ENCODE measurements at regions of chr11 and their contacts with region 1.

Region 1: DNA sequence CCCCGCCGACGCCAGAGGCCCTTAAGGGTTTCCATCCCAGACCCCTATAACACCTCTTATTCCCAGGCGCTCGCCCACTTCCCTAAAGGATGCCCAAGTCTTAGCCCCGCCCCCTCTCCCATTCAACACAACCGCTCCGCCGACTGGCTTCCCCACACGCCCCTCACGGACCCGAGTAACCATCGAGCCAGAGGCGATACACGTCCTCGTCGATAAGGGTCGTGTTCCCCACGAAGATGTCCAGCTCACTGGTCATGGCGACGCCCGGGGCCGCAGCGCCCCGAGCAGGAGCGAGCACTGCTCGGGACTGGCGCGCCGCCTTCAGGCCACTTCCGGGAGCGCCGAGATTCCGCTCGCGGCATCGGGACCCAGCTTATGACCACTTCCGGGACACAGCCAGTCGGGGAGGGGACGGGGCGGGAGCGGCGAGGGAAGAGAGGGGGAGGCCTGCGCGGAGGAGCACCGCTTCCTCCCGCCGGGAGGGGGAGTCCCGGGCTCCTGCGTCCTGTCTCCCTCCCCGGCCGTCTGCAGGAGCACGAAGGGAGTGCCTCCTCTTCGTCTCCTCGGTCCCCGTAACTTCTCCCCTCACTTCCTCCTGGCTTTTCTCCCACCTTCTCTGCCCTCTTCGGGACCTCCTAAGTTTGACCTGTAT is at the start of gene FIBP:
- DNase-seq: peak; percentile 83
- ATAC-seq: peak; percentile 69
- H3K4me3 ChIP-seq: peak within 1 kb of the TSS; percentile 90
- H3K27ac ChIP-seq: peak within 1 kb of the TSS; percentile 84
- H3K4me1 ChIP-seq: peaks cover 29% of the 10 kb centered on the region
- H3K27me3 ChIP-seq: no peaks in the 10 kb centered on the region
- CTCF ChIP-seq: peak; percentile 78 to 84 (median 80)
- EP300 ChIP-seq: peak in 1 of 2 experiments; percentile 46; a peak in 1 of 4 replicates
- POLR2A ChIP-seq: peak; percentile 96
- RAD21 ChIP-seq: peak; percentile 45
- polyA plus RNA-seq, gene FIBP: 65.1 to 80.7 TPM

Region 2: DNA sequence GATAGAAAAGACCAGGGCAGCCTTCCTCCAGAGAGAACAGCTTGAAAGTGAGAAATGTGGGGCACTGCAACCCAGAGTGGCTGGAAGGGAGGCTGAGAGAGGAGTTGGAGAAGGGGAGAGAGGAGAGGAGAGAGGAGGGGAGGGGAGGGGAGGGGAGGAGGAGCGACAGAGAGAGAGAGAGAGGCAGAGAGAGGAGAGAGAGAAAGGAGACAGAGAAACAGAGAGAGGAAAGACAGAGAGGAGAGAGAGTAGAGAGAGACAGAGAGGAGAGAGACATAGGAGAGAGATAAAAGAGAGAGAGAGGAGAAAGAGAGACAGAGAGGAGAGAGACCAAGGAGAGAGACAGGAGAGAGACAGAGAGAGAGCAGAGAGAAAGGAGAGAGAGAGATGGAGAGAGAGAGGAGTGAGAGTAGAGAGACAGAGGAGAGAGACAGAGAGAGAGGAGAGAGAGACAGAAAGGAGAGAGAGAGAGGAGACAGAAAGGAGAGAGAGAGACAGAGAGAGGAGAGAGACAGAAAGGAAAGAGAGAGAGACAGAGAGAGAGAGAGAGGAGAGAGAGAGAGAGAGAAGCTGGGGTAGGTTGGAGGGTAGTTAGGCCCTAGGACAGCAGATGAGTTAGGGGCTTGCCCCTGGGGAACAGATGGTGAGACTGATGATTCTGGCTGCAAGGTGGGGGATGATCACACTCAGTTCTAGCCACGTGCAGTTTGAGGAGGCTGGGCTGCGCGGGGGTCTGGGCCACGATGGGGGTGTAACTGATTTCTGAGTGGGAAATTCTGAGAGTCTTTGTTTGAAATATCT is 372.0 kb before region 1 on chr11:
- CTCF ChIA-PET with region 1: no interaction called
- POLR2A ChIA-PET with region 1: no interaction called
- RAD21 ChIA-PET with region 1: no interaction called
- SMC1A ChIA-PET with region 1: no interaction called
- in situ Hi-C with region 1: no loop called
- intact Hi-C with region 1: no loop called
- DNase-seq: no peak
- ATAC-seq: peak; percentile 43; the same call in 2 of the 3 replicates
- H3K4me3 ChIP-seq: no peak overlapping the region
- H3K27ac ChIP-seq: no peak overlapping the region
- H3K4me1 ChIP-seq: no peaks in the 10 kb centered on the region
- H3K27me3 ChIP-seq: no peaks in the 10 kb centered on the region; a peak in 1 of 4 replicates
- CTCF ChIP-seq: no peak
- EP300 ChIP-seq: no peak
- POLR2A ChIP-seq: no peak
- RAD21 ChIP-seq: no peak

Region 3: GRCh38 chr11:65615229-65615941 is 272.9 kb before region 1 on chr11 and contains the start of gene PCNX3:
- CTCF ChIA-PET with region 1: interaction called, 3 read pairs
- POLR2A ChIA-PET with region 1: interaction called, 4 read pairs
- RAD21 ChIA-PET with region 1: no interaction called
- SMC1A ChIA-PET with region 1: interaction called, 11 read pairs
- in situ Hi-C with region 1: no loop called
- intact Hi-C with region 1: no loop called
- DNase-seq: peak; percentile 100
- ATAC-seq: peak; percentile 86
- H3K4me3 ChIP-seq: peak within 1 kb of the TSS; percentile 100
- H3K27ac ChIP-seq: peak within 1 kb of the TSS; percentile 91
- H3K4me1 ChIP-seq: peaks cover 24% of the 10 kb centered on the region
- H3K27me3 ChIP-seq: no peaks in the 10 kb centered on the region
- CTCF ChIP-seq: no peak
- EP300 ChIP-seq: peak in 1 of 2 experiments; percentile 57; a peak in 2 of 4 replicates
- POLR2A ChIP-seq: peak; percentile 64
- RAD21 ChIP-seq: no peak
- polyA plus RNA-seq, gene PCNX3: 0.03 to 0.15 TPM

Region 4: DNA sequence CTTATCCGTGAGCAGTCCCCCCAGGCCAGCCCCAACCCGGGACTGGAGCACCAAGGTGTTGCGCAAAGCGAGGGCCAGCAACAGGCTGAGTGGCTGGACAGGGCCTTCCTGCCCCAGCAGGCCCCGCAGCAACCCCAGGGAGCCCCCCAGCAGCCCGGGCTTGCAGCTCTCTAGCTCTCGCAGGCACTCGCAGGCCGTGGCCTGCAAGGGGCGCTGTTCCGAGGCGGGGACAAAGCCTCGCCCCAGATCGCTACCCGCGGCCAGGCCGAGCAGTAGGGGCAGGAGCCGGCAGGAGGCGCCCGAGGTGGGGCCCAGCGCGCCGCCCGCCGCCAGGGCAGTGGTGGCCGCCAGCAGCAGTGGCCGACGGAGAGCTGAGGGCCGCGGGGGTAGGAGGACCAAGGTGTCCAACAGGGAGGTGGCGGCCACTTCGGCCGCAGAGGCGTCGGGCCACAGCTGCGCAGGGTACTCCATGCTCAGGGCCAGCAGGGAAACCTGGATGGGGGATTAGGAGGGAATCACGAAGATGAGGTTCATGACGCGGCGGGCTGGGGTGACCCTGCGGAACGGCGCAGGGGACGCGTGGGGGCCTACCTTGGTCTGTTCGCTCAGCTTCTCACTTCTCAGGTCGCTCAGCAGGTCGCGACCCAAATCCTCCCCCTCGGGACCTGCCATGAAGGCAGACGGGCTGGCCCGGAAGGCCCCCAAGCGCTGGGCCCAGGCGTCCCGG is 108.3 kb before region 1 on chr11:
- CTCF ChIA-PET with region 1: interaction called, 20 read pairs
- POLR2A ChIA-PET with region 1: interaction called, 3 read pairs
- RAD21 ChIA-PET with region 1: interaction called, 4 read pairs
- SMC1A ChIA-PET with region 1: interaction called, 4 read pairs
- in situ Hi-C with region 1: no loop called
- intact Hi-C with region 1: no loop called
- DNase-seq: peak; percentile 21
- ATAC-seq: peak; percentile 94
- H3K4me3 ChIP-seq: peak overlapping the region; percentile 80
- H3K27ac ChIP-seq: peak overlapping the region; percentile 61
- H3K4me1 ChIP-seq: peaks cover 16% of the 10 kb centered on the region
- H3K27me3 ChIP-seq: no peaks in the 10 kb centered on the region
- CTCF ChIP-seq: peak; percentile 87 to 98 (median 92)
- EP300 ChIP-seq: no peak
- POLR2A ChIP-seq: peak; percentile 48
- RAD21 ChIP-seq: peak; percentile 76

Region 5: GRCh38 chr11:65873318-65874156 is 14.8 kb before region 1 on chr11:
- CTCF ChIA-PET with region 1: interaction called, 66 read pairs
- POLR2A ChIA-PET with region 1: interaction called, 22 read pairs
- RAD21 ChIA-PET with region 1: interaction called, 21 read pairs
- SMC1A ChIA-PET with region 1: interaction called, 13 read pairs
- in situ Hi-C with region 1: no loop called
- intact Hi-C with region 1: no loop called
- DNase-seq: peak; percentile 87
- ATAC-seq: peak; percentile 89
- H3K4me3 ChIP-seq: peak overlapping the region; percentile 87
- H3K27ac ChIP-seq: peak overlapping the region; percentile 51
- H3K4me1 ChIP-seq: peaks cover 11% of the 10 kb centered on the region
- H3K27me3 ChIP-seq: no peaks in the 10 kb centered on the region
- CTCF ChIP-seq: no peak
- EP300 ChIP-seq: no peak
- POLR2A ChIP-seq: peak; percentile 83
- RAD21 ChIP-seq: no peak

Region 6: GRCh38 chr11:65927904-65928397 is 39.7 kb after region 1 on chr11:
- CTCF ChIA-PET with region 1: interaction called, 16 read pairs
- POLR2A ChIA-PET with region 1: interaction called, 29 read pairs
- RAD21 ChIA-PET with region 1: interaction called, 9 read pairs
- SMC1A ChIA-PET with region 1: interaction called, 19 read pairs
- in situ Hi-C with region 1: no loop called
- intact Hi-C with region 1: loop called (anchors 5 kb)
- DNase-seq: peak; percentile 84
- ATAC-seq: peak; percentile 95
- H3K4me3 ChIP-seq: peak overlapping the region; percentile 65
- H3K27ac ChIP-seq: peak overlapping the region; percentile 99
- H3K4me1 ChIP-seq: peaks cover 20% of the 10 kb centered on the region
- H3K27me3 ChIP-seq: no peaks in the 10 kb centered on the region
- CTCF ChIP-seq: no peak
- EP300 ChIP-seq: peak; percentile 38 to 58; a peak in 1 of 4 replicates
- POLR2A ChIP-seq: peak; percentile 68
- RAD21 ChIP-seq: no peak

Region 7: GRCh38 chr11:66001942-66002647 is 113.8 kb after region 1 on chr11 and contains the starts of genes BANF1 and EIF1AD:
- CTCF ChIA-PET with region 1: interaction called, 6 read pairs
- POLR2A ChIA-PET with region 1: interaction called, 22 read pairs
- RAD21 ChIA-PET with region 1: interaction called, 13 read pairs
- SMC1A ChIA-PET with region 1: no interaction called
- in situ Hi-C with region 1: no loop called
- intact Hi-C with region 1: no loop called
- DNase-seq: peak; percentile 93
- ATAC-seq: peak; percentile 87
- H3K4me3 ChIP-seq: peak within 1 kb of the TSS; percentile 93
- H3K27ac ChIP-seq: peak within 1 kb of the TSS; percentile 93
- H3K4me1 ChIP-seq: peaks cover 11% of the 10 kb centered on the region
- H3K27me3 ChIP-seq: no peaks in the 10 kb centered on the region
- CTCF ChIP-seq: no peak
- EP300 ChIP-seq: no peak; a peak in 1 of 4 replicates
- POLR2A ChIP-seq: peak; percentile 96
- RAD21 ChIP-seq: no peak
- polyA plus RNA-seq, gene BANF1: 501 to 574 TPM
- polyA plus RNA-seq, gene EIF1AD: 51.5 to 56.8 TPM

Measured in GM12878 (cell line).